H1 (cell line): ENCODE measurements at regions of chr20 and their contacts with region 1.

Region 1: GRCh38 chr20:51029963-51030920 is 7.3 kb upstream of the KCNG1 start:
- DNase-seq: no peak
- H3K4me3 ChIP-seq: no peak overlapping the region
- H3K27ac ChIP-seq: no peak overlapping the region
- H3K4me1 ChIP-seq: 0 out of 7 replicates have a peak, but pooled peaks cover 0 to 2% (median 0%) of the 10 kb centered on the region in 4 experiments
- H3K27me3 ChIP-seq: peaks cover 0 to 7% (median 4%) of the 10 kb centered on the region in 4 experiments; a peak in 3 of 7 replicates
- CTCF ChIP-seq: no peak
- EP300 ChIP-seq: no peak
- POLR2A ChIP-seq: no peak
- RAD21 ChIP-seq: no peak

Region 2: DNA sequence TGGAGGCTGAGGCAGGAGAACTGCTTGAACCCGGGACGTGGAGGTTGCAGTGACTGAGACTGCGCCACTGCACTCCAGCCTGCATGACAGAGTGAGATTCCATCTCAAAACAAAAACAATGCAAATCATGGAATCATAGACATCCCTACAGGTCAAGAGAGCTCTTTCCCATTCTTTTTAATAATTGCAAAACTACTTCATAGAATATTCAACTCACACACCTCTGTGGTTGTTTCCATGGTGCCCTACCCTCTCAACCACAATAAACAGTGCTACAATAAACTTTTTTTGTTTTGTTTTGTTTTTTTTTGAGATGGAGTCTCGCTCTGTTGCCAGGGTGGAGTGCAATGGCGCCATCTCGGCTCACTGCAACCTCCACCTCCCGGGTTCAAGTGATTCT is 87.2 kb before region 1 on chr20:
- CTCF ChIA-PET with region 1: no interaction called
- POLR2A ChIA-PET with region 1: no interaction called
- DNase-seq: no peak
- H3K4me3 ChIP-seq: no peak overlapping the region
- H3K27ac ChIP-seq: no peak overlapping the region
- H3K4me1 ChIP-seq: no peaks in the 10 kb centered on the region
- H3K27me3 ChIP-seq: no peaks in the 10 kb centered on the region
- CTCF ChIP-seq: no peak
- EP300 ChIP-seq: no peak
- POLR2A ChIP-seq: no peak
- RAD21 ChIP-seq: no peak

Region 3: GRCh38 chr20:51042654-51043247 is 12.5 kb after region 1 on chr20:
- CTCF ChIA-PET with region 1: interaction called, 21 read pairs
- POLR2A ChIA-PET with region 1: no interaction called
- DNase-seq: peak in 1 of 2 experiments; percentile 60
- H3K4me3 ChIP-seq: no peak overlapping the region
- H3K27ac ChIP-seq: no peak overlapping the region
- H3K4me1 ChIP-seq: no peaks in the 10 kb centered on the region; a peak in 1 of 7 replicates
- H3K27me3 ChIP-seq: no peaks in the 10 kb centered on the region
- CTCF ChIP-seq: peak; percentile 66 to 69 (median 66)
- EP300 ChIP-seq: no peak
- POLR2A ChIP-seq: no peak
- RAD21 ChIP-seq: peak; percentile 48 to 60